ENCODE measurements at regions of chr1 and their contacts with region 1.

Region 1: GRCh38 chr1:181105134-181106021 is 16.9 kb downstream of the IER5 start:
- DNase-seq: peak; percentile 85
- H3K4me3 ChIP-seq: peak overlapping the region; percentile 68 to 78 (median 69)
- H3K27ac ChIP-seq: peak overlapping the region; percentile 76
- H3K4me1 ChIP-seq: peaks cover 62% of the 10 kb centered on the region
- H3K27me3 ChIP-seq: no peaks in the 10 kb centered on the region
- CTCF ChIP-seq: no peak

Region 2: DNA sequence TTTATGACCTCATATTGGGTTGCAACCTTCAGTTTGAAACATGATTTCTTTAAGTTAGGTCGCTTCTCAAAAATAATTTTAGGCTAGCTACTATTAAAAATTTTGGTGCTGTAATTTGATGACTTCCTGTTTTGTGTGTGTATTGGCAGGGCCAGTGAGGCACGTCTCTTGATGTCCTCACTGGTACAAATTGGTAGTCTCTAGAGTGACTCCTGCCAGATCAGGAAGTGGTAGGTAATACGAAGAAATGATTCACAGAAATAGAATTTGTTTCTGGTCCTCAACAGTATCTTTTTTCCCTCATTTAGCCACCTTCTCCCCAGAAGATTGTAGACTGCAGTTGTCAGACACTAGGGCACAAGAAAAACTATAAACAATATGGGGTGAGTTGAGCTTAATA is 313.6 kb before region 1 on chr1:
- CTCF ChIA-PET with region 1: no interaction called
- dilution Hi-C with region 1: no loop called
- in situ Hi-C with region 1: no loop called
- intact Hi-C with region 1: no loop called
- DNase-seq: peak; percentile 23
- H3K4me3 ChIP-seq: no peak overlapping the region
- H3K27ac ChIP-seq: no peak overlapping the region
- H3K4me1 ChIP-seq: peaks cover 6% of the 10 kb centered on the region
- H3K27me3 ChIP-seq: no peaks in the 10 kb centered on the region
- CTCF ChIP-seq: no peak

Region 3: DNA sequence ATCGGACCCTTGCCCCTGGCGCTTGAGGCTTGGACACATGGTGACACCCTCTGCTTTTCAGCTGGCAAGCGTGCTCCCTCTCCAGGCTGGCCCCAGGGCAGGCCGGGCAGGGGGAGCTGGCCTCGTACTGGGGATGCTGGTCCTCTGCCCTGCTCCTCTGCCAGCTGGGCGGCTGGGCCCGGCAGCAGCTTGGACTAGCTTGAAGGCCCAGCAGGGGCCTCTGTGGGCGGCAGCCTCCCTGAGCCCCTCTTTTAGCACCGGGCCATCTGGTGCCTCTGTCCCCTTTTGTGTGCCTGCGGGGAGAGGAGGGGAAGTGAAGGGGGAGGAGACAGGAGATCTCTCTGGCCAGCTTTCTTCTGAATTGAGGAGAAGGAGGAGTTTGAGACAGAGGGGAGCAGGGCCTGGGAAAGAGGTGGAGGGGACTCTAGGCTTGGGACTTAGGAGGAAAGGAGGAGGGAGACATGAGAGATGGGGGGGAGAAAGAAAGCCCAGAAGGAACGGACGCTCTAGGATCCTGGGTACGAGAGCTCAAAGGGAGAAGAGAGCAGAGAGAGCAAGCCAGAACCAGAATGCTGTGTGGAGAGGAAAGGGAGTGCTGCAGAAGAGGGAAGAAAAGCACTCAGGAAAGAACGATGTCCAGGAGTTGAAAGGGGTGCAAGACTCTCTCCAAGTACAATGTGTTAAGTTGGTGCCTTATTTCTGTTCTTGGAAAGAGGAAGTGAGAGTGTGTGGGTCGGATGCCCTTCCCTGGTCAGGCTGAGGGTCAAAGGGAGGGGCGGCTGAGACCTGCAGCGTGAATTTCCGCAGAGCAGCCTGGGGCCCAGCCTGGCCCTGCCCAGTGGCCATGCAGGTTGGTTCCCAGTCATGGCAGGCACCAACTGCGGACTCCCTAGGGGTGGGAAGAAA is 23.5 kb after region 1 on chr1:
- CTCF ChIA-PET with region 1: interaction called, 11 read pairs
- dilution Hi-C with region 1: no loop called
- in situ Hi-C with region 1: no loop called
- intact Hi-C with region 1: no loop called
- DNase-seq: no peak
- H3K4me3 ChIP-seq: no peak overlapping the region
- H3K27ac ChIP-seq: no peak overlapping the region
- H3K4me1 ChIP-seq: peaks cover 9% of the 10 kb centered on the region
- H3K27me3 ChIP-seq: no peaks in the 10 kb centered on the region
- CTCF ChIP-seq: no peak

Region 4: GRCh38 chr1:181430015-181430885 is 324.9 kb after region 1 on chr1:
- CTCF ChIA-PET with region 1: no interaction called
- dilution Hi-C with region 1: no loop called
- in situ Hi-C with region 1: no loop called
- intact Hi-C with region 1: no loop called
- DNase-seq: no peak
- H3K4me3 ChIP-seq: no peak overlapping the region
- H3K27ac ChIP-seq: no peak overlapping the region
- H3K4me1 ChIP-seq: no peaks in the 10 kb centered on the region
- H3K27me3 ChIP-seq: no peaks in the 10 kb centered on the region
- CTCF ChIP-seq: no peak